ENCODE measurements at regions of chr10 and their contacts with region 1.

Region 1: GRCh38 chr10:60646966-60647796 is 131.1 kb upstream of the CDK1 start:
- DNase-seq: peak in 2 of 5 donors; percentile 27 to 47
- H3K4me3 ChIP-seq: no peak overlapping the region
- H3K27ac ChIP-seq: no peak overlapping the region
- H3K4me1 ChIP-seq: peaks cover 1% of the 10 kb centered on the region
- H3K27me3 ChIP-seq: no peaks in the 10 kb centered on the region
- CTCF ChIP-seq: peak; percentile 52 to 66 (median 64)
- EP300 ChIP-seq: no peak
- POLR2A ChIP-seq: no peak

Region 2: DNA sequence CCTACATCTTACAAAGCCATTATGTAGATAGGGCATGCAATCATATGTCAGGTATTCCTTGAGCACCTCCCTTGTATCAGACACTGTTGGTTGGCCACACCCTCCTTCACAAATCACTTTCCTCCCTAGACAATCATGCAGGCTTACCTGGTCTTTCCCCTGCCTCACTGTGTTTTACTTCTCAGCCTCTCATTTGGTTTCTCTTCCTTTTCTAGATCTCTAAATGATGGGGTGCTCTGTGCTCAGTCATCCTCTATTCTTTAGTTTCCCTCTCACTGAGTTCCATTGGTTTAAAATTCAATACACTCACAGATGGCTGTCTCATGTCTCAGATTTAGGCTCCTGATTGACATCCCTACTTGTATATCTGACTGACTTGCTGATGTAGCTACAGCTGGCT is 288.9 kb before region 1 on chr10:
- intact Hi-C with region 1: no loop called
- DNase-seq: no peak
- H3K4me3 ChIP-seq: no peak overlapping the region
- H3K27ac ChIP-seq: no peak overlapping the region
- H3K4me1 ChIP-seq: peaks cover 2% of the 10 kb centered on the region
- H3K27me3 ChIP-seq: no peaks in the 10 kb centered on the region
- CTCF ChIP-seq: no peak
- EP300 ChIP-seq: no peak
- POLR2A ChIP-seq: no peak

Region 3: DNA sequence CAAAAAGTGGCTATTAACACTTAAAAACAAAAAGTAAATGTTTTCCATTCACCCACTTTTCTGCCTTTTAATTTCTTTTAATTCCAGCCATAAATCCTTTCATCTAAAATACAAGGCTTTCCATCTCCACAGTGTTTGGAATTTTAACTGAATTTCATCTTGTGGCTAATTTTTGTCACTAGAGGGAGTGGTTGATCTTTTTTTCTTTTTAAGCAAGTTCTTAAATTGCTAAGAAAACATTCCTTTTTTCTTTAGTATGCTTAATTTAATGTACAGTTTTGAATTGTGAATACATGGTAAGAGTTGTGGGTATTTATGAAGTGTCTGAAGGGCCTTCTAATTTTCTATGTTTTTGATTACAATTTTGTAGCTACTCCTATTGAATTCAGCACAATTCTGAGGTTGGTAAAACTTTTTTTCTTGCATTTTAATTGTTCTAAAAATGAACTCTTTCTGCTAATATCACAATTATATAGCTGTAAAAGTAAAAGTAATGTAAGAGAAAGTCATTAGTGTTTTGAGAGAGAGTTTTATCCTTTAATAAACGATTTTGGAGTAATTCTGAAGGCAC is 202.6 kb before region 1 on chr10:
- intact Hi-C with region 1: loop called in 3 of 4 experiments (anchors 5 to 10 kb)
- DNase-seq: no peak
- H3K4me3 ChIP-seq: no peak overlapping the region
- H3K27ac ChIP-seq: no peak overlapping the region
- H3K4me1 ChIP-seq: no peaks in the 10 kb centered on the region
- H3K27me3 ChIP-seq: no peaks in the 10 kb centered on the region
- CTCF ChIP-seq: peak in 2 of 3 donors; percentile 28 to 32
- EP300 ChIP-seq: no peak
- POLR2A ChIP-seq: no peak